Sigmoid colon (tissue), 7 donors: ENCODE measurements at regions of chr11 and their contacts with region 1.

Region 1: GRCh38 chr11:22787551-22788162 is 41.9 kb downstream of the SVIP start:
- DNase-seq: no peak
- H3K4me3 ChIP-seq: no peak overlapping the region
- H3K27ac ChIP-seq: no peak overlapping the region
- H3K4me1 ChIP-seq: no peaks in the 10 kb centered on the region
- H3K27me3 ChIP-seq: no peaks in the 10 kb centered on the region
- CTCF ChIP-seq: peak in 3 of 4 experiments; percentile 23 to 55 (median 38)
- EP300 ChIP-seq: no peak
- POLR2A ChIP-seq: no peak

Region 2: DNA sequence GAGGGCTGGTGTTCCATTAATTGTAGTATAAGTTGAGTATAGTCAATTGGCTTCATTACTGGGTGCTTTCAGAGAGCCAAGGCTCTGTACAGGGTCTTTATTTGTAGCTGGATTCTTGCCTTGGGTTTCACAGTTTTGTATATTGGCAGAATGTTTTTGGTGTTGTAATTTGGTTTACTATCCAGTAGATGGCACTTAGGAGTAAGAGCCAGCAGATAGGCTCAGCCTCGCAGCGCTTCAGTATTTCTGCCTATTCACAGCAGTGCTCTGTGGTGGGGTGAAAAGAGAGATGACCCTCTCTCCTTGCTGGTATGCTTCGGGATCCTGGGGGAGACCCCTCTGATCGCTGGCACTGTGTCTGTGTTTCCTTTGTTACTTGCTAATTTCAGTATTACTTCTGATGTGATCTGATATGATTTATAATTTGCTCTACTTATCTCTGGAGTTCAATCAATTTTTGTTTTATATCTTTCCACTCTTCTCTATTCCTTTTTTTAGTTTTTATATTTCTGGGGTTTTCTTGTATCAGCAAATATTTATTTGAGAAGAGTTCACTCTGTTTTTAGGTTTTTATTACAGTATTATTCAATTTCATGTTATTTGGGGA is 542.6 kb before region 1 on chr11:
- intact Hi-C with region 1: loop called (anchors 10 kb)
- DNase-seq: no peak
- H3K4me3 ChIP-seq: no peak overlapping the region
- H3K27ac ChIP-seq: no peak overlapping the region
- H3K4me1 ChIP-seq: no peaks in the 10 kb centered on the region
- H3K27me3 ChIP-seq: no peaks in the 10 kb centered on the region
- CTCF ChIP-seq: peak in 3 of 4 experiments; percentile 24 to 49 (median 26)
- EP300 ChIP-seq: no peak
- POLR2A ChIP-seq: no peak

Region 3: DNA sequence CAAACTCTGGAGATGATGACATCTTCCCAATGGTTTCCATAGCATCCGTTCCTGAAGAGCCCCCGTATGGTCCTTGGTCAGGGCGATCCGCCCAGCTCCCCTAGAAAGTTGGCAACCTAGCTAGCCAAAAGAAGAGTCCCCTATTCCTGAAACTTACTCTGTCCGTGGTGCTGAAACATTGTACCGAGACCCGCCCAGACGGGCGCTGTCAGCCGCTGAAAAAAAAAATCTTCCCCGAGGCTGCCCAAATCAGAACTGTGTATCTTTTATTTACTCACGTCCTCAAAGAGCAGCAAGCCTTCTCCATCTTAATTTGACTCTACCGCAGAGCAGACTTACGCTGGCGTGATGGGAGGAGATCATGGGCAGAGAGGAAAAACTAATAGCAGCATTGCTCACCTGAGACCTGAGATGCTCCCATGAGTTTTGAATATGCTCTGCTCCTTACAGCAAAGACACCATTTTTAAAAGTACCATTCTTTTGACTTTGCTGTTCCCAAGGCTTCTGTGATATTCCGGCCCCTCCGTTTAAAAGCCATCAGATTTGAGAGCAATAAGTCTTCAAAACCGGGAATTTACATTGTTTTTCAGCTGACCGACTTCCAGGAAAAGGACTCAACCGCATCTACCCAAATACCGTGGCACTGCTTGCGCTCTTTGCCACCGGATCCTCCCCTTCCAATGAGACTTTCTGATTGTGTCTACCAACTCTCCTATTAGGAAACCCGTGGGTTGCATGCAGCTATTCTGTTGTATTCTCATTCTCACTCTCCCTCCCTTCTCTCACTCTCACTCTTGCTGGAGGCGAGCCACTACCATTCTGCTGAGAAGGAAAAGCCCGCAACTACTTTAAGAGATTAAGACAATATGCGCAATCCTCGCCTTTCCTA is 449.8 kb before region 1 on chr11 and contains the start of gene SLC17A6:
- intact Hi-C with region 1: loop called (anchors 2 kb)
- DNase-seq: no peak
- H3K4me3 ChIP-seq: no peak within 1 kb of the TSS
- H3K27ac ChIP-seq: no peak within 1 kb of the TSS
- H3K4me1 ChIP-seq: no peaks in the 10 kb centered on the region
- H3K27me3 ChIP-seq: peaks cover 20 to 61% (median 53%) of the 10 kb centered on the region in 3 donors
- CTCF ChIP-seq: no peak
- EP300 ChIP-seq: no peak
- POLR2A ChIP-seq: no peak
- total RNA-seq, gene SLC17A6: not detected